MCF 10A (cell line): ENCODE measurements at regions of chr1 and their contacts with region 1.

Region 1: DNA sequence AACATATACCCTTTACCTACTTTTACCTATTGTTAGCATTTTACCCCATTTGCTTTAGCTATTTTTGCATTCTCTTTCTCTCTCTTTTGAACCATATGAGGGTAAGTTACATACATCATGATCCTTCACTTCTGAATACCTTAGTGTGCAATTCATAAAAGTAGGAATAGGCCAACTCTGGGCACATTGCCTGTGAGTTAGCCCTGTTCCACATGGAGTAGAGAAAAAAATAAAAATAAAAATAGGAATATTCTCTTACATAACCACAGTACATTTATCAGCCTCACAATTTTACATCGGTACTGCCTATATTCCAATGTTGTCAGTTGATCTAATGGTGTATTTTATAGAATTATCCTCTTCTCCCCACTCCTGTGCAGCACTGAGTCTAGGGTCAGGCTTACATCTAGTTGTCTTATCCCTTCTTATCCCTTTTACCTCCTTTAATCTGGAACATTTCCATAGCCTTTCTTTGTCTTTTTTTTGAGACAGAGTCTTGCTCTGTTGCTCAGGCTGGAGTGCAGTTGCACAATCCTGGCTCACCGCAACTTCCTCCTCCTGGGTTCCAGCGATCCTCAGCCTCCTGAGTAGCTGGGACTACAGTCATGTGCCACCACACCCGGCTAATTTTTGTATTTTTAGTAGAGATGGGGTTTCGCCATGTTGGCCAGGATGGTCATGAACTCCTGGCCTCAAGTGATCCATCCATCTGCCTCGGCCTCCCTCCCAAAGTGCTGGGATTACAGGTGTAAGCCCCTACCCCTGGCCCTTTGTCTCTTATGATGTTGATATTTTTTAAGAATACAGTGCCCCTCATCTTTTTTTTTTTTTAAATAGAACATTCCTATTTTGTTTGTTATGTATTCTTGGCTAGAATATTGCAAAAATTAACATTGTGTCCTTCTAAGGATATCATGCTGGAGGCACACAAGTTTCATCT is 11.1 kb upstream of the SLC30A1 start:
- DNase-seq: peak; percentile 95
- H3K4me3 Mint-ChIP-seq: no peak overlapping the region
- H3K27ac Mint-ChIP-seq: peak overlapping the region; percentile 65
- H3K4me1 Mint-ChIP-seq: peaks cover 30% of the 10 kb centered on the region
- H3K27me3 Mint-ChIP-seq: no peaks in the 10 kb centered on the region
- CTCF ChIP-seq: no peak

Region 2: DNA sequence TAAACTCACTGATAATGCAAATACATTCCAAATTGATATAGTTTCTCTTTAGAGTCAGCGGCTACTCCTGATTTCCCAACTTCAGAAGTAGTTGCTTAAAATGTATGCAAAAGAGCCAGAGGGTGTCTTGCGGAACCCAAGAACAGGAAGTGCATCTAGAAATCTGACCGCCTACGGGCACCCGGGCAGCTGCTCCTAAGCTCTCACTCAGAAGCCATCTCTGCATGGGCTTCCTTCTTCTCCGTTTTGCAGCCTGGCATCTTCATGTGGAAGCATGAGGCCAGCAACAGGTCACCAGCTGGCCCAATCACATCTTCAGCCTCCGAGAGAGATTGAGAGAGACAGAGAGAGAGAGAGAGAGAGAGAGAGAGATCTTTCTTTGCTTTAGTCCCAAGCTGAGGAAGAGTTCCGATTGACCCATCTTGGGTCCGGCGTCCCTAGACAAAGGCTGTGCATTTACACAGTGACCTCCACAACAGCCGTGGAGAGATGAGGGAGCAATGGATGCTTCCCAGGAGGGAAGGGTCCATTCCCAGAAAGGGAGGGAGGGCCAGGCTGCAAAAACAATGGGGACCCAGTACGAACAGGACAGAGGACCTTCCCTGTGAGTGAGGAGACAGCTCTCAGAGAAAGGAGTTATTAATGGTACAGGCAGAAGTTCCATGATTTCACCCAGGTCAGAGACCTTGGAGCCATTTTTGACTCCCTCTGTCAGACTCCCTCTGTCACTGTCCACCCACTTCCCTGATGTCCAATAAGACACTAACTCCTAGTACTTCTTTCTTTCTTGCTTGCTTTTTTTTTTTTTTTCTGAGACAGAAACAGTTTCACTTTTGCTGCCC is 17.1 kb after region 1 on chr1:
- CTCF ChIA-PET with region 1: interaction called, 10 read pairs
- POLR2A ChIA-PET with region 1: interaction called, 25 read pairs
- intact Hi-C with region 1: loop called (anchors 2 kb)
- DNase-seq: peak; percentile 73
- H3K4me3 Mint-ChIP-seq: no peak overlapping the region
- H3K27ac Mint-ChIP-seq: no peak overlapping the region
- H3K4me1 Mint-ChIP-seq: peaks cover 40% of the 10 kb centered on the region
- H3K27me3 Mint-ChIP-seq: no peaks in the 10 kb centered on the region
- CTCF ChIP-seq: no peak

Region 3: GRCh38 chr1:211705467-211706091 is 115.5 kb after region 1 on chr1:
- CTCF ChIA-PET with region 1: no interaction called
- POLR2A ChIA-PET with region 1: no interaction called
- intact Hi-C with region 1: no loop called
- DNase-seq: peak; percentile 83
- H3K4me3 Mint-ChIP-seq: peak overlapping the region; percentile 4
- H3K27ac Mint-ChIP-seq: peak overlapping the region; percentile 7
- H3K4me1 Mint-ChIP-seq: peaks cover 14% of the 10 kb centered on the region
- H3K27me3 Mint-ChIP-seq: no peaks in the 10 kb centered on the region
- CTCF ChIP-seq: no peak